CD4-positive, alpha-beta T cell (primary cell): ENCODE measurements at regions of chr13 and their contacts with region 1.

Region 1: GRCh38 chr13:113995051-113995601 is 21.2 kb upstream of the C13orf46 start:
- DNase-seq: no peak
- ATAC-seq: peak; percentile 19
- H3K4me3 ChIP-seq: no peak overlapping the region
- H3K4me3 Mint-ChIP-seq: no peak overlapping the region
- H3K27ac ChIP-seq: no peak overlapping the region
- H3K27ac Mint-ChIP-seq: no peak overlapping the region
- H3K4me1 ChIP-seq: no peaks in the 10 kb centered on the region
- H3K4me1 Mint-ChIP-seq: no peaks in the 10 kb centered on the region
- H3K27me3 ChIP-seq: no peaks in the 10 kb centered on the region
- H3K27me3 Mint-ChIP-seq: no peaks in the 10 kb centered on the region
- CTCF ChIP-seq: no peak

Region 2: GRCh38 chr13:113981201-113981605 is 13.9 kb before region 1 on chr13:
- CTCF ChIA-PET with region 1: no interaction called
- POLR2A ChIA-PET with region 1: no interaction called
- intact Hi-C with region 1: loop called in 1 of 2 experiments (anchors 2 kb)
- DNase-seq: no peak
- ATAC-seq: no peak
- H3K4me3 ChIP-seq: no peak overlapping the region
- H3K4me3 Mint-ChIP-seq: no peak overlapping the region
- H3K27ac ChIP-seq: no peak overlapping the region
- H3K27ac Mint-ChIP-seq: peak overlapping the region; percentile 42
- H3K4me1 ChIP-seq: no peaks in the 10 kb centered on the region
- H3K4me1 Mint-ChIP-seq: no peaks in the 10 kb centered on the region
- H3K27me3 ChIP-seq: no peaks in the 10 kb centered on the region
- H3K27me3 Mint-ChIP-seq: no peaks in the 10 kb centered on the region
- CTCF ChIP-seq: no peak